ENCODE measurements at regions of chr12 and their contacts with region 1.

Region 1: GRCh38 chr12:119681961-119682638 is 14.2 kb downstream of the PRKAB1 start:
- DNase-seq: no peak
- ATAC-seq: no peak
- H3K4me3 Mint-ChIP-seq: no peak overlapping the region
- H3K27ac Mint-ChIP-seq: peak overlapping the region; percentile 77
- H3K4me1 Mint-ChIP-seq: peaks cover 17% of the 10 kb centered on the region
- H3K27me3 Mint-ChIP-seq: no peaks in the 10 kb centered on the region

Region 2: DNA sequence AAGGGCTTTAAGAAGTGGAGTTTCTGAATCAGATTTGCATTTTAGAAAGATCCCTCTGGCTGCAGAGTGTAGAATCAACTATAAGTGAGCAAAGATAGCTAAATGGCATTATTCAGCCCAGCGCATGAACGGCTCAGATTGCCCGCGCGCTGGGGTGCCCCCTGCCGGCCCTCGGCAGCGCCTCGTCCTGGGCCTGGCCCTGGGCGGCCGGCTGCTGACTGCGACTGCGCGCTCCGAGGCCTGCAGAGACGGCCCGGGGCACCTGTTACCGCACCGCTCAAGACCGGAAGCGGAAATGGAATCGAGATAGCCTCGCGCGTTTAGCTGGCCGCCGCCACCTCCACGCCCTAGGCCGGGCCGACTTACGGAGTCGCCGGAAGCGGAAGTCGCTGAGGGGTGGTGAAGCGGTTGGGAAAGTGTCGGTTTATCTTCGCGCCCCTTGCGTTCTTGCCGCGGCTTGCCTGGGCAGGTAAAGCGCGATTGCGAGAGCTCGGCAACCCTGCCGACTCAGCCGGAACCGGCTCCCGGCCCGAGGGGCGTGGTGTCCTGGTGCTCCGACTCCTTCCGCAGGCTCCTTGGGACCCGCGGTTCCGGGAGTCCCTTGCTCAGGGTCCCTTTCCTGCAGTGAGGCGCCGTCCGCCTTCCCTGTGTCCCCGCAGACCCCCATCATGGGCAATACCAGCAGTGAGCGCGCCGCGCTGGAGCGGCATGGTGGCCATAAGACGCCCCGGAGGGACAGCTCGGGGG is 14.3 kb before region 1 on chr12 and contains the start of gene PRKAB1:
- CTCF ChIA-PET with region 1: interaction called, 23 read pairs
- POLR2A ChIA-PET with region 1: interaction called, 9 read pairs
- DNase-seq: peak; percentile 98
- ATAC-seq: peak; percentile 99
- H3K4me3 Mint-ChIP-seq: peak within 1 kb of the TSS; percentile 92
- H3K27ac Mint-ChIP-seq: peak within 1 kb of the TSS; percentile 94
- H3K4me1 Mint-ChIP-seq: peaks cover 52% of the 10 kb centered on the region
- H3K27me3 Mint-ChIP-seq: no peaks in the 10 kb centered on the region
- total RNA-seq, gene PRKAB1: 31.7 to 33.1 TPM

Region 3: DNA sequence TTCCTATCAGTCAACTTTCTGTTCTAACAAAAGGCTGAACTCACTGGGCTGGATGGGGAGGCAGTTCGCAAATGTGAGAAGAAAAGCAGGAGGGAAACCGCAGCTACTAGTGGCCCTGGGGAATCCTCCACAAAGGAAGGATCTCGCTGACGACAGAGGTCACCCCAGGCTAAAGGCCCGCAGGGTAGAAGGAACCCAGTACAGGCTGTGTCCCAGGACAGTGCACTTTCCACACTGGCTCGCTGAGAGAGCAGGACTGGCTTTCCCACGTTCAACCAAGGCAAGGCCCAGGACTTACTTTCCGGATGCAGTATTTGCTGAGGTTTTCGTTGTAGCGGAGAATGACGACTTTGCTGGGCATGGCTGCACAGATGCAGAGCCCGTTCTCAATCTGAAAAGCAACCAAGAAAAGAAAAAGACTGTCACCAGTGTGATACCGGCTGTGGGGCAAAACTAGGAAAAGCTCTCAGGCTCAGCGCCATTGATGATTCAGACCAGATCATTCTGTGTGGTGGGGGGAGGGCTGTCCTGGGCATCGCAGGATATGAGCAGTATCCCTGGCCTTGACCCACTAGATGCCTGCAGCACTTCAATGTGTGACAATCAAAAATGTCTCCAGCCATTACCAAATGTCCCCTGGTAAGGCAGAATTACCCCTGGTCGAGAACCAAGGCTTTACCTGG is 22.1 kb after region 1 on chr12:
- CTCF ChIA-PET with region 1: no interaction called
- POLR2A ChIA-PET with region 1: no interaction called
- DNase-seq: no peak
- ATAC-seq: no peak
- H3K4me3 Mint-ChIP-seq: no peak overlapping the region
- H3K27ac Mint-ChIP-seq: no peak overlapping the region
- H3K4me1 Mint-ChIP-seq: no peaks in the 10 kb centered on the region
- H3K27me3 Mint-ChIP-seq: no peaks in the 10 kb centered on the region